ENCODE measurements at regions of chr4 and their contacts with region 1.

Region 1: DNA sequence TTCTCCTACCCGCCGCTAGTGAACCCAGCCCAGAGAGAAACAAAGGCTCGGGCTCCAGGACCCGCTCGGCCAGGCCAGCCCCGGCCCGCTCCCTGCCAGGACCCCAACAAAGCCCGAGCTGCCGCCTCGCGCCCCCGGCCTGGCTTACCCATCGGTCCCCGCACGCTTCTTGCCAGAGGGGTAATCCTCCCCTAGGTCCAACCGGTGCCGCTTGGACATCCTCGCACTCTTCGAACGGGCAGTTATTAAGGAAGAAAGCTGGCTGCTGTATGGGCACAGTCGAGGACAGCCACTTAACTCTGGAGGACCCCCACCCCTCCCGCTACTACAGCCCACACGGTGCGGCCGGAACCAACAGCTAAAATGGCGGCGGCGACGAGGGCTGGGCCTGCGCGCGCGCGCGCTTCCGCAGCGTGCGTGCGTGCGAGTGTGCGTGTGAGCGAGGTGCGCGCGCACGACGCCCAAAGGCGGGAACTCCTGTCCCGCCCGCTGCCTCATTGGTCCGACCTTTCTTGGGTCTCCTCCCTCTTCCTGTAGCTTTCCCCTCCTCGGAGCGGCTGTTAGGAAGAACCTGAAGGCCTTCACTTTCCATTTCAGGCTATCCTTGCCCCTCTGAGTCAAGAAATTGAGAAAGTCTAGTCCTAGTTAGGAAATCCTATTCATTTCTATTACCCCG is at the start of gene DHX15:
- DNase-seq: peak; percentile 93 to 95
- H3K4me3 ChIP-seq: peak within 1 kb of the TSS; percentile 74
- H3K4me3 Mint-ChIP-seq: peak within 1 kb of the TSS; percentile 96
- H3K27ac Mint-ChIP-seq: peak within 1 kb of the TSS; percentile 97
- H3K4me1 ChIP-seq: peaks cover 18% of the 10 kb centered on the region
- H3K4me1 Mint-ChIP-seq: peaks cover 8% of the 10 kb centered on the region
- H3K27me3 ChIP-seq: no peaks in the 10 kb centered on the region
- H3K27me3 Mint-ChIP-seq: no peaks in the 10 kb centered on the region
- CTCF ChIP-seq: no peak
- total RNA-seq, gene DHX15: 154 and 155 TPM in 2 replicates

Region 2: DNA sequence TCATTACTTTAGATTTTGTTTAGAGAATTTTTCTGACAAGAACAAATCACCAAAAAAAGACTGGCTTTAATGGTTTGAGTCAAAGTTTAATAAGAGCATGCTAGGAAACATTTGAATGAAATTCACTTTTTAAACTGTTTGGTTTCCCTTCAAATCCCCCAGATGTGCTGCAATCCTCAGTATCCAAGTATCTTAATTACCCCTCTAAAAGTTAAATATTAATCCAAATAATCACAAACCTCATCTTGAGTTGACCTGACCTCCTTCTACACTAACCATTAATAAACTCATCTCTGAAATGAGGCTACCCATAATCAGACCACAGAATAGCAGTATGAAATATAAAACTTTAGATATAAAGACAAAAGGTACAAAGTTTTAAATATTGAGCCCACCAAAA is 10.1 kb before region 1 on chr4:
- CTCF ChIA-PET with region 1: interaction called, 3 read pairs
- POLR2A ChIA-PET with region 1: interaction called, 3 read pairs
- intact Hi-C with region 1: loop called (anchors 1 kb)
- DNase-seq: no peak
- H3K4me3 ChIP-seq: no peak overlapping the region
- H3K4me3 Mint-ChIP-seq: peak overlapping the region; percentile 44
- H3K27ac Mint-ChIP-seq: no peak overlapping the region
- H3K4me1 ChIP-seq: peaks cover 30% of the 10 kb centered on the region
- H3K4me1 Mint-ChIP-seq: peaks cover 45% of the 10 kb centered on the region
- H3K27me3 ChIP-seq: no peaks in the 10 kb centered on the region
- H3K27me3 Mint-ChIP-seq: no peaks in the 10 kb centered on the region
- CTCF ChIP-seq: no peak

Region 3: DNA sequence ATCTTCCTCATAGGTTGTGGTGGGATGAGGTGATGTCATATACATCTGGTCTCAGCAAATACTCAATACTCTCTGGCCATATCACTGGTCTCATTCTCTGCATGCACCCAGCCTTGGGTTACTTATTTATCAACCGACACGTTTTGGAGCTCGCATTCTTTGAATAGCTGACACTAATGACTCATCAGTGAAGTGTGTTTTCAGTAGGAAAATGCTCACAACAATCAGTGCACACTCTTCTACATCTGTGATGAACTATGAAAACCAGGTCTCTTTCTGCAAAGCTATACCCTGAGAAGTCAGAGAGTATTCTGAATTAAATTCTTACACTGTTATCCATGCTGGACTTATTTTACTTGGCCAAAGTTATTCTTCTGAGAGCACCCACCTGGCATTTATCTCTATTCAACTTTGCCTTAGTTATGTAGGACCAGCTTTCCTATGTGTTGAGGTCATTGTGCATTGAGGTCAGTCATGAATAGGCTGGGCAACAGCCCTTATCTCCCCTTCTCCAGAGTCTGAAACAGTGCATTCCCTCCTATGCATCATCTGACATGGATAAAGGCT is 58.8 kb after region 1 on chr4:
- CTCF ChIA-PET with region 1: no interaction called
- POLR2A ChIA-PET with region 1: interaction called, 5 read pairs
- intact Hi-C with region 1: loop called (anchors 1 kb)
- DNase-seq: peak; percentile 69 to 76
- H3K4me3 ChIP-seq: no peak overlapping the region
- H3K4me3 Mint-ChIP-seq: peak overlapping the region; percentile 39
- H3K27ac Mint-ChIP-seq: peak overlapping the region; percentile 69
- H3K4me1 ChIP-seq: peaks cover 24% of the 10 kb centered on the region
- H3K4me1 Mint-ChIP-seq: peaks cover 16% of the 10 kb centered on the region
- H3K27me3 ChIP-seq: no peaks in the 10 kb centered on the region
- H3K27me3 Mint-ChIP-seq: no peaks in the 10 kb centered on the region
- CTCF ChIP-seq: no peak

Region 4: DNA sequence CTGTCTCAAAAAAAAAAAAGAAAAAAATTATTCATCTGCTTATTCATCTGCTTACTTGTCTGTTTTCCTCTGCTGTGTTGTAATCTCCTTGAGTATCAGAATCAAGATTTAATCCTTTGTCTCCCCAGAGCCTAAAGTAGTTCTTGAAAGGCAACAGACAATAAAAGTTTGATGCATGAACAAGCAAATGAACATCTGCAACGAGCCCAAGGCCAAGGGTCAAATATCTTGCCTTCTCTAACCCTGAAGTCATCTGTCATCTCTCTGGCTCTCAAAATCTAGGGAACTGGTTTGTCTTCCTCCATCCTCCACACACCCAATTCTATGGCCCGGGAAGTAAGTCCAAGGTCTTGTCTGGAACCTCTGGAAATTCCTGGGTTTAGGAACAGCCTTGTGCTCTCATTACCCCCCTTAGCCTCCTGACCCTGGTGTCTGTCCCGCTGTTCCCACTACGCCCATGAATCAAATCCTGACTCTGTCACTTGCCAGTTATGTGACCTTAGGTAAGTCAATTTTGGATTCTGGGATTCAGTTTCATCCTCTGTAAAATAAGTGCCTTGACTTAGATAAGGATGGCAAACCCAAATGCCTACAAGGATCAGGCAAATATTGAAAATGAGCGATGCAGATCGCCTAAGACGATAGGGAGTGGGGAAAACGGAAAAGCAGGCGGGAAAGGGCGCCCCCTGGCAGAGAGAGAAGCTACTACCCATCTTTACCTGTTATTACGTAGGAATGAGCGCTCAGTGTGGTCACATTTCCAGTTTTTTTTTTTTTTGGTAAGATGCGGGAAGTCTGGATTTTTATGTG is 102.8 kb after region 1 on chr4:
- CTCF ChIA-PET with region 1: no interaction called
- POLR2A ChIA-PET with region 1: no interaction called
- intact Hi-C with region 1: loop called (anchors 5 kb)
- DNase-seq: peak; percentile 47 to 67
- H3K4me3 ChIP-seq: no peak overlapping the region
- H3K4me3 Mint-ChIP-seq: no peak overlapping the region
- H3K27ac Mint-ChIP-seq: no peak overlapping the region
- H3K4me1 ChIP-seq: peaks cover 6% of the 10 kb centered on the region
- H3K4me1 Mint-ChIP-seq: peaks cover 27% of the 10 kb centered on the region
- H3K27me3 ChIP-seq: no peaks in the 10 kb centered on the region
- H3K27me3 Mint-ChIP-seq: no peaks in the 10 kb centered on the region
- CTCF ChIP-seq: peak; percentile 44 to 74